WTC11 (cell line): ENCODE measurements at regions of chr15 and their contacts with region 1.

Region 1: GRCh38 chr15:93030430-93031105 is 58.4 kb downstream of the RGMA start:
- DNase-seq: peak; percentile 84
- ATAC-seq: peak; percentile 84
- H3K4me3 Mint-ChIP-seq: no peak overlapping the region
- H3K27ac Mint-ChIP-seq: no peak overlapping the region
- H3K4me1 Mint-ChIP-seq: peaks cover 28% of the 10 kb centered on the region
- H3K27me3 Mint-ChIP-seq: no peaks in the 10 kb centered on the region
- CTCF ChIP-seq: peak; percentile 90

Region 2: DNA sequence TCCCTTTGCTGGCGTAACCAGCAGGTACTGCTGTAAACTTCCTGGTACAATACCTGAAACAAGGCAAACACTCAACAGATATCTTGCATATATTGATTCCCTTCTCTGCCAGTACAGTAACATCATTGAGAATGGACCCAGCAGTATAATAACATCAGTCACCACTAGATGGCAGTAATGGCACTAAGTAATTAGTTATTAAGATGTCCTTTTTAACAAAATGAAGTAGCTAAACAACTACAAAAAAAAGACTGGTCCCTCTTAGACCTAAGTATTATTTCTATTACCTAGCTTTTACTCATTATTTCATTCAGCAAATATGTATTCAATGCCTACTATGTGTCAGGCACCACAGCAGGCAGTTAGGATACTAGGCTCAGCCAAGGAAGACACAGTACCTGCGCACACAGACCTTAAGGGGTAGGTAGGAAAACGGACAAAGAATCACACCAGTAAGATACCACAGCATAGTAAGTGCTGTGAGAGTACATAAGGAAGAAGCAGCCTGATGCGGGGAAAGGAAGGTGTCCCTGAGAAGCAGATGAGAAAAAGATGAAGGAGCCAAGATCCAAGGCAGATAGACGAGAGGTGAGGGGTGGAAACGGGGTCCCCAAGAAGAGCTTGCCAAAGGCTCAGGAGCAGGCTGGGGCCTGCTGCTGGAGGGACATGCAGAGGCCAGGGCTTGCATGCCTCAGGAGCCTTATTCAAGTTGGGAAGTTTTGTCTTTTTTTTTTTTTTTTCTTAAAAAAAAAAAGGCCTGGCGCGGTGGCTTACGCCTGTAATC is 233.2 kb before region 1 on chr15:
- CTCF ChIA-PET with region 1: interaction called, 15 read pairs
- POLR2A ChIA-PET with region 1: no interaction called
- DNase-seq: no peak
- ATAC-seq: peak; percentile 82
- H3K4me3 Mint-ChIP-seq: no peak overlapping the region
- H3K27ac Mint-ChIP-seq: peak overlapping the region; percentile 93
- H3K4me1 Mint-ChIP-seq: peaks cover 8% of the 10 kb centered on the region
- H3K27me3 Mint-ChIP-seq: no peaks in the 10 kb centered on the region
- CTCF ChIP-seq: peak; percentile 56

Region 3: GRCh38 chr15:93018580-93018979 is 12.0 kb before region 1 on chr15:
- CTCF ChIA-PET with region 1: interaction called, 15 read pairs
- POLR2A ChIA-PET with region 1: no interaction called
- DNase-seq: no peak
- ATAC-seq: peak; percentile 84
- H3K4me3 Mint-ChIP-seq: no peak overlapping the region
- H3K27ac Mint-ChIP-seq: no peak overlapping the region; the same call in 1 of the 2 replicates
- H3K4me1 Mint-ChIP-seq: no peaks in the 10 kb centered on the region
- H3K27me3 Mint-ChIP-seq: no peaks in the 10 kb centered on the region
- CTCF ChIP-seq: no peak

Region 4: GRCh38 chr15:93060336-93061263 is 30.0 kb after region 1 on chr15:
- CTCF ChIA-PET with region 1: interaction called, 17 read pairs
- POLR2A ChIA-PET with region 1: no interaction called
- DNase-seq: no peak
- ATAC-seq: no peak
- H3K4me3 Mint-ChIP-seq: peak overlapping the region; percentile 29; the same call in 1 of the 2 replicates
- H3K27ac Mint-ChIP-seq: peak overlapping the region; percentile 89
- H3K4me1 Mint-ChIP-seq: peaks cover 87% of the 10 kb centered on the region
- H3K27me3 Mint-ChIP-seq: no peaks in the 10 kb centered on the region
- CTCF ChIP-seq: no peak

Region 5: GRCh38 chr15:93072411-93073394 is 42.1 kb after region 1 on chr15:
- CTCF ChIA-PET with region 1: interaction called, 24 read pairs
- POLR2A ChIA-PET with region 1: no interaction called
- DNase-seq: peak; percentile 89
- ATAC-seq: peak; percentile 78
- H3K4me3 Mint-ChIP-seq: peak overlapping the region; percentile 97
- H3K27ac Mint-ChIP-seq: peak overlapping the region; percentile 92
- H3K4me1 Mint-ChIP-seq: peaks cover 67% of the 10 kb centered on the region
- H3K27me3 Mint-ChIP-seq: peaks cover 16% of the 10 kb centered on the region
- CTCF ChIP-seq: no peak

Region 6: DNA sequence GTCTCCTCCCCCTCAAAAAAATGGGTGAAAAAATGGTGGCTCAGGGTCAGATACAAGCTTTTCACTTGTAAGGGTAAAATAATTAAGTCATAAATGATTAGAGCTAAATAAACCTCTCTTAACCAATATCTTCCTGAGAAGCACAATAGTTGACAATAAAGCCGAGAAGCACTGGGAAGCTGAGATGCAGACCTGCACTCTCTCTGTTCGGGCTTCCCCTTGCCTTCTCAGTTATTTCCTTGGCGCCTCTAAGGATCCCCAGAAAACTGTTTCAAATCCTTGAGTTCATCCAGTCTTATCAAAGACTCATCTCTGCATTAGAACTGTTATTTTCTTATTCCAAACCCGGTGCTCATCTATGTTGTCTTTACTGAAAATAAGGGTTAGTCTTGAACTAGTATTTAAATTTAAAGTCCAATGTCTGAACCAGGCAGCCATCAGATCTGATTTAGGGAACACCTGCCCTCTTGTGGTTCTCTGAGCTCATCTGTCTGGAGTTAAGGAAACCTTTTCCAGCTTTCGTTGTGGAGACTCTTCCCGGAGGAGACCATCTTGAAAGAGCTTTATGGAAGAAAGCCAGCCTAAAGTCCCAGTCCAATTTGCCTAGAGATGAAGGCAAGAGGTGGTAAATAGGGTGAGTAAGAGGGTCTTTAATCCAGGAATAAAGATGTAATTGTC is 944.4 kb after region 1 on chr15:
- CTCF ChIA-PET with region 1: interaction called, 24 read pairs
- POLR2A ChIA-PET with region 1: no interaction called
- DNase-seq: peak; percentile 22
- ATAC-seq: peak; percentile 97
- H3K4me3 Mint-ChIP-seq: peak overlapping the region; percentile 9; the same call in 1 of the 2 replicates
- H3K27ac Mint-ChIP-seq: no peak overlapping the region
- H3K4me1 Mint-ChIP-seq: peaks cover 8% of the 10 kb centered on the region
- H3K27me3 Mint-ChIP-seq: no peaks in the 10 kb centered on the region
- CTCF ChIP-seq: peak; percentile 25; the same call in 1 of the 2 replicates